ENCODE measurements at regions of chrX and their contacts with region 1.

Region 1: DNA sequence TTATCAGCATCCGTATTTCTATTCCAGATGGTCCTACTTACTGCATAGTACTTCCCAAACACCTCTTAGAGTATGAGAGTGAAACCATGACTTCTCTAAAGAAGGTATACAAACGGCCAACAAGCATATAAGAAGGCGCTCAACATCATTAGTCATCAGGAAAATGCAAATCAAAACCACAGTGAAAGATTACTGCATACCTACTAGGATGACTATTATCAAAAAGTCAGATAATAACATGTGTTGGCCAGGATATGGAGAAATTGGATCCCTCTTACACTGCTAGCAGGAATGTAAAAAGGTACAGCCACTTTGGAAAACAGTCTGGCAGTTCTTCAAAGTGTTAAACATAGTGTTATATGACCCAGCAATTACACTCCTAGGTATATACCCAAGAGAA is 215.3 kb upstream of the CXorf66 start:
- DNase-seq: peak; percentile 69
- H3K4me3 Mint-ChIP-seq: no peak overlapping the region
- H3K27ac Mint-ChIP-seq: no peak overlapping the region
- H3K4me1 Mint-ChIP-seq: peaks cover 15% of the 10 kb centered on the region
- H3K27me3 Mint-ChIP-seq: peaks cover 17% of the 10 kb centered on the region
- CTCF ChIP-seq: no peak

Region 2: GRCh38 chrX:140318296-140318695 is 137.7 kb after region 1 on chrX:
- CTCF ChIA-PET with region 1: no interaction called
- POLR2A ChIA-PET with region 1: no interaction called
- intact Hi-C with region 1: loop called (anchors 5 kb)
- DNase-seq: peak; percentile 70
- H3K4me3 Mint-ChIP-seq: no peak overlapping the region
- H3K27ac Mint-ChIP-seq: no peak overlapping the region
- H3K4me1 Mint-ChIP-seq: peaks cover 11% of the 10 kb centered on the region
- H3K27me3 Mint-ChIP-seq: peaks cover 11% of the 10 kb centered on the region
- CTCF ChIP-seq: no peak

Measured in MCF 10A (cell line).